ENCODE measurements at regions of chr13 and their contacts with region 1.

Region 1: GRCh38 chr13:100392709-100393641 is 195.6 kb downstream of the GGACT start:
- DNase-seq: peak; percentile 81 to 97
- H3K4me3 ChIP-seq: no peak overlapping the region
- H3K27ac ChIP-seq: peak overlapping the region; percentile 83
- H3K4me1 ChIP-seq: peaks cover 34% of the 10 kb centered on the region
- H3K27me3 ChIP-seq: no peaks in the 10 kb centered on the region
- CTCF ChIP-seq: no peak

Region 2: GRCh38 chr13:99969919-99970621 is 422.9 kb before region 1 on chr13:
- CTCF ChIA-PET with region 1: no interaction called
- POLR2A ChIA-PET with region 1: interaction called, 15 read pairs
- intact Hi-C with region 1: no loop called
- DNase-seq: peak; percentile 62 to 63
- H3K4me3 ChIP-seq: peak overlapping the region; percentile 94
- H3K27ac ChIP-seq: peak overlapping the region; percentile 61
- H3K4me1 ChIP-seq: no peaks in the 10 kb centered on the region
- H3K27me3 ChIP-seq: no peaks in the 10 kb centered on the region
- CTCF ChIP-seq: no peak

Region 3: DNA sequence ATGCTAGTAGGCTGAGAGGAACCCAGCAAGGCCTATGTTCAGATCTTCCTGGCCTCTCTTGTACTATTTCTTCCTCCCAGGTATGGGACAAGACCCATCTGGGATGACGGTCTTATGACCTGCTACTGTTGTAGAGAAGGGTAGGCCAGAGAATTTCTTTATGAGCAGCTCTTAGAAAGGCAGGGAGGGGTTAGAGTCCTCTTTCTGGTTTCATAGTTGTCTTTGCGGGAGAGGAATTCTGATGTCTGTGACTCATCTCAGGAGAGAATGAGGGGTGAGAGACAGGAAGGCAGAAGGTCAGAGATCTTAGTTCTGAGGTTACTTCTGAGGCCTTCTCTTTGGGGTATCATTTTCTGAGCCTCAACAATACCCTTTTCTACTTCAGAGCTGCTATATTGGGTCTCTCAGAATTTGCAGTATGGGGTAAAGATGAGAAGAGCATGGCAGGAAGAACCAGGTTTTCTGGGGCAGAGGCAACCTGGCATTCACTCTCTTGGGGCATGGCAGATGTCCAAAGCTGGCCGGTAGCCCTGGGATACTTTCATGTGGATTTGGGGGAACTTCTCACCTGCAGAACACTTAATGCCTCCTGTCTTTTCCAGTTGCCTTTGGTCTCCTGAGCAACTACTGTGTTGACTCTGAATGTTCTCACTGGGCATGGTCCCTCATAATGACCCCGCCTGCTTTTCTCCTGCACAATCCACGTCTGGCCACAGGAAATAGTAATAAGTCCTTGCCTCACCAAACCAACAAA is 41.2 kb after region 1 on chr13:
- CTCF ChIA-PET with region 1: no interaction called
- POLR2A ChIA-PET with region 1: no interaction called
- intact Hi-C with region 1: loop called (anchors 1 kb)
- DNase-seq: peak; percentile 50 to 79
- H3K4me3 ChIP-seq: no peak overlapping the region
- H3K27ac ChIP-seq: peak overlapping the region; percentile 80
- H3K4me1 ChIP-seq: peaks cover 26% of the 10 kb centered on the region
- H3K27me3 ChIP-seq: no peaks in the 10 kb centered on the region
- CTCF ChIP-seq: no peak

Region 4: GRCh38 chr13:100440751-100441425 is 47.9 kb after region 1 on chr13:
- CTCF ChIA-PET with region 1: no interaction called
- POLR2A ChIA-PET with region 1: interaction called, 11 read pairs
- intact Hi-C with region 1: no loop called
- DNase-seq: peak in 1 of 2 experiments; percentile 45
- H3K4me3 ChIP-seq: no peak overlapping the region
- H3K27ac ChIP-seq: no peak overlapping the region
- H3K4me1 ChIP-seq: peaks cover 19% of the 10 kb centered on the region
- H3K27me3 ChIP-seq: no peaks in the 10 kb centered on the region
- CTCF ChIP-seq: no peak

Region 5: GRCh38 chr13:100491164-100491842 is 98.3 kb after region 1 on chr13:
- CTCF ChIA-PET with region 1: no interaction called
- POLR2A ChIA-PET with region 1: no interaction called
- intact Hi-C with region 1: loop called (anchors 5 kb)
- DNase-seq: no peak
- H3K4me3 ChIP-seq: no peak overlapping the region
- H3K27ac ChIP-seq: no peak overlapping the region
- H3K4me1 ChIP-seq: peaks cover 27% of the 10 kb centered on the region
- H3K27me3 ChIP-seq: no peaks in the 10 kb centered on the region
- CTCF ChIP-seq: no peak

Region 6: GRCh38 chr13:100530671-100531213 is 137.8 kb after region 1 on chr13:
- CTCF ChIA-PET with region 1: interaction called, 11 read pairs
- POLR2A ChIA-PET with region 1: no interaction called
- intact Hi-C with region 1: no loop called
- DNase-seq: no peak
- H3K4me3 ChIP-seq: no peak overlapping the region
- H3K27ac ChIP-seq: no peak overlapping the region
- H3K4me1 ChIP-seq: no peaks in the 10 kb centered on the region
- H3K27me3 ChIP-seq: no peaks in the 10 kb centered on the region
- CTCF ChIP-seq: no peak

Measured in PC-9 (cell line).